Activated T-helper 1 cell treated with anti-CD3 and anti-CD28 coated beads, Interleukin-12 subunit alpha, Interleukin-12 subunit beta, Interleukin-2, Interleukin-4 antibody, amounts not matched to agents 30 ng/mL and 10 ng/mL and 1 ng/mL, durations not matched to agents 14 hours and 24 hours and 36 hours (primary cell): ENCODE measurements at regions of chr1 and their contacts with region 1.

Region 1: GRCh38 chr1:155277070-155277895 is at the start of gene HCN3:
- DNase-seq: peak; percentile 91
- H3K4me3 Mint-ChIP-seq: peak within 1 kb of the TSS; percentile 83
- H3K27ac Mint-ChIP-seq: peak within 1 kb of the TSS; percentile 62
- H3K4me1 Mint-ChIP-seq: peaks cover 38% of the 10 kb centered on the region
- H3K27me3 Mint-ChIP-seq: peaks cover 7% of the 10 kb centered on the region
- total RNA-seq, gene HCN3: 2.5 and 3.3 TPM in 2 replicates

Region 2: DNA sequence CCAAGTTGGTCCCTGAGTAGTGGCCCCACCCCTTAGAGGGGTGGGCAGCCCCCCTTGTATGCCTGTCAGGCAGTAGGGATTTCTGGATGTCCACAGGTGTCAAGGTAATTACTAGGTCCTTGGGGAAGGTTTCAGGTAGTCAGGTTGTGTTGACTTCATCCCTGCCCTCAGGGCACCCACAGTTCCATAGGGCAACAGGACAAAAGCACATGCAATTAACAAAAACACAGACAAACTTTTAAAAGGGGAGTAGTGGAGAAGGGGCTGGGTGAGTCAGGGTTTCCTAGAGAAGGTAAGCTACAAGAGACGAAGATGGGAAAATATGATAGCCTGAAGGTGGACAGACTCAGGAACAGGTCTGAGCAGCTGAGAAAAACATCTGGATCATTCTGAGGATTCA is 118.3 kb before region 1 on chr1:
- intact Hi-C with region 1: no loop called
- DNase-seq: no peak
- H3K4me3 Mint-ChIP-seq: no peak overlapping the region
- H3K27ac Mint-ChIP-seq: no peak overlapping the region
- H3K4me1 Mint-ChIP-seq: no peaks in the 10 kb centered on the region
- H3K27me3 Mint-ChIP-seq: peaks cover 16% of the 10 kb centered on the region

Region 3: DNA sequence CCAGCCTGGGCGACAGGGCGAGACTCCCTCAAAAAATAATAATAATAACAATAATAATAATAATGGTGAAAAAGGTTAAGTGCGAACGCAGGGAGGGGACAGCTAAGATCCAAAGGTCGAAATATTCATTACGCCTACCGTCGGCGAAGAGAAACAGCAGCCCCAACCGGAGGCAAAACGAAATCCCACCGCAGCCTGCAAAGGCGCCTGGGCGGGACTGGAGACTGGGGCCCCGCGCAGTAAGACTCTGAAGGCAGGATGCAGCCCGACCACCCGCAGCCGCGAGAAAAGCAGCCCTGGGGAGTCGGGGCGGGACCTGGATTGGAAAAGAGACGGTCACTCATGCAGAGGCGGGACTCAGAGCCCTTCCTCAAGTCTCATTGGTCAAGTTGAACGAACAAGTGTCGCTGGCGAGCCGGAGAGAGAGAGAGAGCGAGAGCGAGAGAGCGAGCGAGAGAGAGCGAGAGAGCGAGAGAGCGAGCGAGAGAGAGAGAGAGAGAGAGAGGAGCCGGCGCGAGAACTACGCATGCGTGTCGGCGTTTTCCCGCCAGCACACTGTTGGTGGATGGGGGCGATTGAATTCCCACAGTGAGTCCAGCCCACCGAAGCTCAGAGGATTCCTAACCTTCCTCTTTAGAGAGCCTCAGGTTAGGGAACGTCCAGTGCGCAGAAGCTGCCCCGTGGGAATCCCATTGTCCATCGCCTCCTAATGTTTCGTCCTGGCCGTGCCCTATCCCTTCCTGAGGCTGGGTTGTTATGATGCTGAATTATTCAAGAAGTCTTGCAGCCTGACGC is 32.7 kb before region 1 on chr1:
- intact Hi-C with region 1: loop called (anchors 5 kb)
- DNase-seq: peak; percentile 95
- H3K4me3 Mint-ChIP-seq: peak overlapping the region; percentile 86
- H3K27ac Mint-ChIP-seq: peak overlapping the region; percentile 100
- H3K4me1 Mint-ChIP-seq: peaks cover 50% of the 10 kb centered on the region
- H3K27me3 Mint-ChIP-seq: peaks cover 2% of the 10 kb centered on the region

Region 4: DNA sequence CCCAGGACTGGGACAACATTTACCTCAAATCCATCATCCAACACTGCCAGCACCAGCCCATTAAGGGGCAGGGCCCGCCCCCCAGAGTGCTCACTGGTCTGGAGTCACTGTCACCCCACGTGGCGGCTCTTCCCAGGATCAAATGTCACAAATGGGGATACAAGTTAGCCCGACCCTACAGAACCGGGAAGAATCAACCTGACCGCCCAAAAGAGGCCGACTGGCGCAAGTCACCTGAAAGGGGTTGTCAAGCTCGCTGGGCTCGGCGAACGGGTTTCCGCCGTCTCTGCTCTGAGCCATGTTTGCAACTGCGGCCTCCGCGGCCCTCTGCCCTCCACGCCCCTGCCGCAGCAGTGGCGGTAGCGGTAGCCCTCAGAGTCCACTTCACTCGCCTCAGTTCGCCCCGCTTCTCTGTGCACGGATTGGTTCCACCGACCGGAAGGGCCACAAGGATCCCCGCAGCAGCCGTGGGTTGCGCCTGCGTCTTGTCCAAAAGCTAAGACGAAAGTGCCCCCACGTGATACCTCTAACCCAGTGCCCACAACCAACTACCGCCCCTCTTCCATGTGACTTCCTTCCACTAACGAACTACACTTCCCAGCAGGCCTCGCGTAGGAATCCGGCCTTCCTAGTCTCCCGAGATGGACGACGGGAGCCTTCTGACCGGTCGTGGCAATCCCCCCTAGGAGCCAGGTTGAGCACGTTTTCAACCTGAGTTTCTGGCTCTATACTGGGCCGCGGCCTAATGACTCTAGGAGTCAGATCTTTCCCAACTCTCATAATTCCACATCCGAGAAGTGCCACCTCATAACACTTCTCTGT is 15.2 kb before region 1 on chr1 and contains the start of gene SCAMP3:
- intact Hi-C with region 1: loop called (anchors 1 kb)
- DNase-seq: peak; percentile 88
- H3K4me3 Mint-ChIP-seq: peak within 1 kb of the TSS; percentile 90
- H3K27ac Mint-ChIP-seq: peak within 1 kb of the TSS; percentile 88
- H3K4me1 Mint-ChIP-seq: peaks cover 38% of the 10 kb centered on the region
- H3K27me3 Mint-ChIP-seq: no peaks in the 10 kb centered on the region
- total RNA-seq, gene SCAMP3: 147 and 168 TPM in 2 replicates

Region 5: GRCh38 chr1:155562581-155563376 is 285.5 kb after region 1 on chr1 and contains the start of gene ASH1L:
- intact Hi-C with region 1: loop called (anchors 2 kb)
- DNase-seq: peak; percentile 85
- H3K4me3 Mint-ChIP-seq: peak within 1 kb of the TSS; percentile 96
- H3K27ac Mint-ChIP-seq: peak within 1 kb of the TSS; percentile 99
- H3K4me1 Mint-ChIP-seq: peaks cover 24% of the 10 kb centered on the region
- H3K27me3 Mint-ChIP-seq: no peaks in the 10 kb centered on the region
- total RNA-seq, gene ASH1L: 44.0 and 45.4 TPM in 2 replicates